Naive thymus-derived CD4-positive, alpha-beta T cell (primary cell): ENCODE measurements at regions of chr14 and their contacts with region 1.

Region 1: DNA sequence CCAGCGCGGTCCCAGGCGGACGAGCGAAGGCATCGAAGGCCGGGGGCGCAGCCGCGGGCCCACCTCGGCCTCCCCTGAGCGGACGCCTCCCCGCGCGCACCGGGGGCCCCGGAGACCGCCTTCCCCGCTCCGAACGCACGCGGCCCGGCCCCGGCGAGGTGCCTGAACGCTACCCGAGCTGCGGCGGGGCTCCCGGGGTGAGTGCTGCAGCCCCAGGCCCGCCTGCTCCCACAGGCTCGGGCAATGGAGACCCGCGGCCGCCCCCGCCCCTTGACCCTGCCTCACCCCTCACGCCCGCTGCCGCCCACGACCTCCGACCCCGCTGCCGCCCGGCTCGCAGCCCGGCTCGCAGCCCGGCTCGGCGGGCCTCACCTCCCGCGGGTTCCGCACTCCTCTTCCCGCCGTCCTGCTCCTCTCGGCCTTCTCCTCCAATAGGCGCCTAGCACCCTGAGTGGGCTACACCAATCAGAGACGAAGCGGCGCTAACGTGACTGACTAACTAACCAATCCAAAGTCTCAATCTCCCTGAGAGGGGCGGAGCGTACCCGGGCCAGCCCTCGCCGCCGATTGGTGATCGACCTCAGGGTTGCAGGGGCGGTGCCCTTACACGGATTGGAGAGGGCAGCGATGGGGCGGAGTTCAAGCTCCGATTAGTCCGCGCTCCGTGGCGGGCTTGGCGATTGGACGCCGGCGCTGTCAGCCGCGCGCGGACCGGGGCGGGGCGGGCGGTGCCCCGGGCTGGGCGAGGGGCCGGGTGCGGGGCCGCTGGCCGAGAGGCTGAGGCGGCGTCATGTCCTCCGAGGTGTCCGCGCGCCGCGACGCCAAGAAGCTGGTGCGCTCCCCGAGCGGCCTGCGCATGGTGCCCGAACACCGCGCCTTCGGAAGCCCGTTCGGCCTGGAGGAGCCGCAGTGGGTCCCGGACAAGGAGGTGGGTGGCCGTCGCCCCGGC is at the starts of genes XRCC3 and ZFYVE21:
- DNase-seq: peak; percentile 96 to 100 (median 100)
- ATAC-seq: peak; percentile 97
- H3K4me3 ChIP-seq: peak within 1 kb of the TSS; percentile 56
- H3K4me3 Mint-ChIP-seq: peak within 1 kb of the TSS; percentile 89 to 98 (median 94)
- H3K27ac ChIP-seq: peak within 1 kb of the TSS; percentile 73
- H3K27ac Mint-ChIP-seq: peak within 1 kb of the TSS; percentile 40 to 95 (median 91)
- H3K4me1 ChIP-seq: peaks cover 8 to 13% of the 10 kb centered on the region in 2 donors
- H3K4me1 Mint-ChIP-seq: peaks cover 38 to 69% (median 52%) of the 10 kb centered on the region in 7 donors
- H3K27me3 ChIP-seq: no peaks in the 10 kb centered on the region
- H3K27me3 Mint-ChIP-seq: peaks cover 0 to 2% (median 0%) of the 10 kb centered on the region in 5 donors
- total RNA-seq, gene XRCC3: 9.3 to 38.9 (median 15.9) TPM
- total RNA-seq, gene ZFYVE21: 5.8 to 19.0 (median 16.8) TPM

Region 2: GRCh38 chr14:103520657-103521437 is 194.5 kb before region 1 on chr14:
- CTCF ChIA-PET with region 1: no interaction called
- POLR2A ChIA-PET with region 1: no interaction called
- intact Hi-C with region 1: loop called (anchors 2 to 5 kb)
- DNase-seq: peak; percentile 48 to 72 (median 60)
- ATAC-seq: peak; percentile 85
- H3K4me3 ChIP-seq: peak overlapping the region; percentile 37
- H3K4me3 Mint-ChIP-seq: peak overlapping the region; percentile 18 to 77 (median 64)
- H3K27ac ChIP-seq: no peak overlapping the region
- H3K27ac Mint-ChIP-seq: no peak overlapping the region
- H3K4me1 ChIP-seq: peaks cover 7 to 15% of the 10 kb centered on the region in 2 donors
- H3K4me1 Mint-ChIP-seq: peaks cover 0 to 21% (median 13%) of the 10 kb centered on the region in 7 donors
- H3K27me3 ChIP-seq: no peaks in the 10 kb centered on the region
- H3K27me3 Mint-ChIP-seq: peaks cover 0 to 33% (median 6%) of the 10 kb centered on the region in 5 donors

Region 3: GRCh38 chr14:103606963-103607668 is 108.2 kb before region 1 on chr14:
- CTCF ChIA-PET with region 1: no interaction called
- POLR2A ChIA-PET with region 1: no interaction called
- intact Hi-C with region 1: loop called in 1 of 2 experiments (anchors 1 kb)
- DNase-seq: peak; percentile 15 to 63 (median 46)
- ATAC-seq: peak; percentile 84
- H3K4me3 ChIP-seq: peak overlapping the region; percentile 49
- H3K4me3 Mint-ChIP-seq: peak overlapping the region; percentile 76 to 93 (median 84)
- H3K27ac ChIP-seq: no peak overlapping the region
- H3K27ac Mint-ChIP-seq: peak overlapping the region; percentile 19 to 86 (median 52)
- H3K4me1 ChIP-seq: peaks cover 18 to 21% of the 10 kb centered on the region in 2 donors
- H3K4me1 Mint-ChIP-seq: peaks cover 14 to 28% (median 21%) of the 10 kb centered on the region in 7 donors
- H3K27me3 ChIP-seq: no peaks in the 10 kb centered on the region
- H3K27me3 Mint-ChIP-seq: peaks cover 0 to 28% (median 0%) of the 10 kb centered on the region in 5 donors

Region 4: DNA sequence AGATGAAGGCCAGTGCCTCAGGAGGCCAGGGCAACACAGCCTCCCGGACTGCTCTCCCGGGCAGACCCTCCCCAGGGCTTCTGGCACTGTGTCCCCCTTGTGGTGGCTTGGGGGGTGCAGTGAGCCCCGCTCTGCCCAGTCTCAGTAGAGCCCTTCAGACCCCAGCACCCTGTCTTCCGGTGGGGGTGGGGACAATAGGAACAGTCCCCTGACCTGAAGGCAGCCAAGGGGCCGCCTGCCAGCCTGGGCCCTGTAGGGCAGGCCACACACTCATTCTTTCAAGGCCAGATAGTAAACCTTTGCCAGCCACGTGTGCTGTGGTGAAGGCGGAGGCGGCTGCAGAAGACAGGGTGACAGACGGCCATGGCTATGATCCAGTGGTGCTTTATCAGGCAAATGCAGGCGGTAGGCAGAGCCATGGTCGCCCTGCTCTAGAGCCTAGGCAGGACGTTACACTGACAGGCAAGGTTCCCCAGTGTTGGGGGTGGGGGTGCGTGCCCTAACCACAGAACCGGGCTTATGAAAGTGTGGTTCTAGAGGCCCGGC is 15.2 kb after region 1 on chr14:
- CTCF ChIA-PET with region 1: no interaction called
- POLR2A ChIA-PET with region 1: no interaction called
- intact Hi-C with region 1: no loop called
- DNase-seq: no peak
- ATAC-seq: peak; percentile 21
- H3K4me3 ChIP-seq: no peak overlapping the region
- H3K4me3 Mint-ChIP-seq: no peak overlapping the region
- H3K27ac ChIP-seq: no peak overlapping the region
- H3K27ac Mint-ChIP-seq: no peak overlapping the region
- H3K4me1 ChIP-seq: no peaks in the 10 kb centered on the region
- H3K4me1 Mint-ChIP-seq: peaks cover 0 to 7% (median 0%) of the 10 kb centered on the region in 7 donors
- H3K27me3 ChIP-seq: no peaks in the 10 kb centered on the region
- H3K27me3 Mint-ChIP-seq: no peaks in the 10 kb centered on the region

Region 5: DNA sequence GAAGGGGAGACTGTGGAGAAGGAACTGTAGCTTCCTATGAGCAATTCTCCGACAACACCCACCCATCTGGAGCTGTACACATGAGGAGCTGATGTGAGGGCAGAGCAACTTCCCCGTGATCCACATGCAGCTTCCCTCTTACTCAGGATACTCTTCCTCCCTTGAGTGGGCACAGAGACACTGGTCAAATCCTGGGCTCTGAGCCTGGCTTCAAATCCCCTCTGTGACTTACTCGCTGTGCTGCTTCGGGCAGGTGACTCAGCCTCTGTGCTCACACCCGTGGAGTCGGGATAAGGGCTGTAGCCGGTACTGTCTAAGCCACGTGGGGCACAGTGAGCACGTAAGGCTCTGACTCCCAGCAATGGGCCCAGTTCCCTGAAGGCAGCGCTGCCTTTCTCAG is 31.4 kb after region 1 on chr14:
- CTCF ChIA-PET with region 1: no interaction called
- POLR2A ChIA-PET with region 1: interaction called, 3 read pairs
- intact Hi-C with region 1: loop called in 1 of 2 experiments (anchors 1 kb)
- DNase-seq: no peak
- ATAC-seq: no peak
- H3K4me3 ChIP-seq: no peak overlapping the region
- H3K4me3 Mint-ChIP-seq: no peak overlapping the region
- H3K27ac ChIP-seq: no peak overlapping the region
- H3K27ac Mint-ChIP-seq: peak overlapping the region in 2 of 9 donors; percentile 8 to 9
- H3K4me1 ChIP-seq: peaks cover 12 to 22% of the 10 kb centered on the region in 2 donors
- H3K4me1 Mint-ChIP-seq: peaks cover 0 to 21% (median 17%) of the 10 kb centered on the region in 7 donors
- H3K27me3 ChIP-seq: no peaks in the 10 kb centered on the region
- H3K27me3 Mint-ChIP-seq: no peaks in the 10 kb centered on the region

Region 6: DNA sequence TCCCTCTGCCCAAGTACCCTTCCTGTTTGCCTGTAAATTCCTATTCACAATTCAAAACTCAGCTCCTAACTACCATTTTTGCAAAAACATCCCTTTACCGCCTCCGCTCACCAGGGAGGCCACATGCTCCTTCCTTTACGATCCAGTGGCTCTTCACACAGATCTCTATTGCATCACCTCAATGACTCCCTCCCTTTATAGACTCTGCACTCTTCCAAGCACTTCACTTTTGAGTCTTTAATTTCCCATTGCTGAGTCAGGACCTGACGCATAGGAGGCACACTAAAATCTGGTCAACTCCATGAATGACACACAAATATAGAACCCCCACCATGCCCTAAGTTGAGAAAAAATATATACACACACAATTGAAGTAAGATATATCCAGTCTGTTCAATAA is 86.1 kb after region 1 on chr14:
- CTCF ChIA-PET with region 1: no interaction called
- POLR2A ChIA-PET with region 1: no interaction called
- intact Hi-C with region 1: no loop called
- DNase-seq: no peak
- ATAC-seq: no peak
- H3K4me3 ChIP-seq: no peak overlapping the region
- H3K4me3 Mint-ChIP-seq: no peak overlapping the region
- H3K27ac ChIP-seq: no peak overlapping the region
- H3K27ac Mint-ChIP-seq: peak overlapping the region in 1 of 9 donors; percentile 0
- H3K4me1 ChIP-seq: no peaks in the 10 kb centered on the region
- H3K4me1 Mint-ChIP-seq: peaks cover under 1 to 16% (median 6%) of the 10 kb centered on the region in 7 donors
- H3K27me3 ChIP-seq: no peaks in the 10 kb centered on the region
- H3K27me3 Mint-ChIP-seq: no peaks in the 10 kb centered on the region

Region 7: GRCh38 chr14:103910262-103910935 is 195.1 kb after region 1 on chr14:
- CTCF ChIA-PET with region 1: no interaction called
- POLR2A ChIA-PET with region 1: no interaction called
- intact Hi-C with region 1: loop called in 1 of 2 experiments (anchors 1 kb)
- DNase-seq: peak; percentile 43 to 74 (median 71)
- ATAC-seq: peak; percentile 86
- H3K4me3 ChIP-seq: peak overlapping the region; percentile 40
- H3K4me3 Mint-ChIP-seq: peak overlapping the region; percentile 70 to 88 (median 78)
- H3K27ac ChIP-seq: peak overlapping the region; percentile 59
- H3K27ac Mint-ChIP-seq: peak overlapping the region; percentile 73 to 96 (median 84)
- H3K4me1 ChIP-seq: peaks cover 13 to 23% of the 10 kb centered on the region in 2 donors
- H3K4me1 Mint-ChIP-seq: peaks cover 7 to 34% (median 28%) of the 10 kb centered on the region in 7 donors
- H3K27me3 ChIP-seq: no peaks in the 10 kb centered on the region
- H3K27me3 Mint-ChIP-seq: no peaks in the 10 kb centered on the region

Region 8: DNA sequence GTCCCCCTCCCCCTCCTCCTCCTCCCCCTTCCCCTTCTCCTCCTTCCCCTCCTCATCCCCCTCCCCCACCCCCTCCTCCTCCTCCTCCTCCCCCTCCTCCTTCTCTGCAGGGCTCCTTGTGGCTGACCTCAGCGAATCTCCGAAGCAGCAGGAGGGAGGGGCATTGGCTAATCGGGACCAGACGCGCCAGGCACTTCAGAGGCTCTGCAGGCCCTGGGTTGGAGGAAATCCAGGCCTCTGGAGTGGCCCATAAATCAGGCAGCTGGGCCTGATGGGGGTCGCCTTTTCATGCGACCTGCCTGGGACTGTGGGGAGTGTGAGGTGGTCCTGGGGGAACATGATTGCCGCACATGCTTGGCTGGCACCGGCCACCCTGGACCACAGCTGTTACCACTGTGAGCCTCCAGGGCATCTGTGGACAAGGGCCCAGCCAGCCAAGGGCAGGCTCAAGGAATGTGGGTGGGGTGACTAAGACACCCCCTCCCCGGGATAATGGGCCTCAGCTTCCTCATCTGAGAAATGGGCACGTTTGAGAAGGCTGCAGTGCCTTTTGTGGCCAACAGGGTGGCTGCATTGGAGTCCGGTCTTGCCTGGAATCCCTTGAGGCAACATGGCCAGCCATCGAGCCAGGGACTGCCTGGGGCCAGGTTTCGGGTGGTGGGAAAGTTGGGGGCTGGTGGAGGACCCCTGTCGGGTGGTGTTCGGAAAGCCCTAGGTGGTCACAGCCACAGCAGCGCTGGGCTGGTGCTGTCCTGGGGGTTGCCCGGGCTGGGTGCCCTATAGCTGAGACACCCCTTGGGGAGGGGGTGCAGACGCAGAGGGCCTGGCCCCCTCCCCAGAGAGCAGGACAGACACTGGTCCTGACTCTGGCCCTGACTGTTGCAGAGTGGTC is 435.1 kb after region 1 on chr14:
- CTCF ChIA-PET with region 1: no interaction called
- POLR2A ChIA-PET with region 1: no interaction called
- intact Hi-C with region 1: no loop called
- DNase-seq: no peak
- ATAC-seq: no peak
- H3K4me3 ChIP-seq: no peak overlapping the region
- H3K4me3 Mint-ChIP-seq: no peak overlapping the region
- H3K27ac ChIP-seq: no peak overlapping the region
- H3K27ac Mint-ChIP-seq: no peak overlapping the region
- H3K4me1 ChIP-seq: no peaks in the 10 kb centered on the region
- H3K4me1 Mint-ChIP-seq: no peaks in the 10 kb centered on the region
- H3K27me3 ChIP-seq: no peaks in the 10 kb centered on the region
- H3K27me3 Mint-ChIP-seq: peaks cover 0 to 4% (median 0%) of the 10 kb centered on the region in 5 donors